ENCODE measurements at regions of chr7 and their contacts with region 1.

Region 1: GRCh38 chr7:137670199-137671071 is 176.3 kb downstream of the DGKI start:
- DNase-seq: no peak
- ATAC-seq: no peak
- H3K4me3 Mint-ChIP-seq: no peak overlapping the region
- H3K27ac Mint-ChIP-seq: no peak overlapping the region
- H3K4me1 Mint-ChIP-seq: no peaks in the 10 kb centered on the region
- H3K27me3 Mint-ChIP-seq: no peaks in the 10 kb centered on the region

Region 2: DNA sequence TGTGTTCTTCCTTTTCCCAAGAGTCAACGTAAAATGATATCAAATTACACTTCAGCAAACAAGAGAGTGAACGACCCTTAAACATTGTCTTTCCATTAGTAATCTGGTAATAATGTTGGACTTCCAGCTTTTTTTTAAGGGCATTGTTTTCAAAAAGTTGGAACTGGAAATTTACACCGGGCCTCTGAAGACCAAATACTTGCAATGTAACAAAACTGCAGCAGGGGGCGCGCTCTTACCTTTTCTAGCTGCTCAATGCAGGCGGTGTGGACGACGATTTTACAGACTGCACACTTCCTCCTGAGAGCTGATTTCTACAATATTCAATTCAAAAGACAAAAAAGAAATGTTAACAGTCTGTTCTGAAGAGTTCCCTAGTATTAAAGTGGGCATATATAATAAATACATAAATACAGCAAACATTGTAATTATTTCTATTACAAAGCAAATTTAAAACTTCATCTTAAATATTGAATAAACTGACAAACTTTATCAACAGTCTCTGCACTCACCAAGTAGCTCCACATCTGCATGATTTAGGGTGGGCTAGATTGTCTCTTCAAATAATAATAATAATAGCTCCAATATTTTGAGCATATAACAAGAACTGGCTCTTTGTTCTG is 14.1 kb before region 1 on chr7:
- CTCF ChIA-PET with region 1: interaction called, 17 read pairs
- POLR2A ChIA-PET with region 1: no interaction called
- DNase-seq: peak; percentile 77
- ATAC-seq: peak; percentile 63
- H3K4me3 Mint-ChIP-seq: no peak overlapping the region
- H3K27ac Mint-ChIP-seq: no peak overlapping the region
- H3K4me1 Mint-ChIP-seq: no peaks in the 10 kb centered on the region
- H3K27me3 Mint-ChIP-seq: peaks cover 7% of the 10 kb centered on the region